K562 (cell line): ENCODE measurements at regions of chr7 and their contacts with region 1.

Region 1: GRCh38 chr7:148575640-148576411 is 14.7 kb upstream of the C7orf33 start:
- DNase-seq: peak; percentile 75 to 84 (median 77)
- ATAC-seq: peak; percentile 93
- H3K4me3 ChIP-seq: no peak overlapping the region
- H3K27ac ChIP-seq: no peak overlapping the region
- H3K4me1 ChIP-seq: no peaks in the 10 kb centered on the region
- H3K27me3 ChIP-seq: peaks cover 0 to 18% of the 10 kb centered on the region in 2 experiments; a peak in 2 of 5 replicates
- CTCF ChIP-seq: peak; percentile 87 to 96 (median 96)
- EP300 ChIP-seq: no peak
- POLR2A ChIP-seq: no peak
- RAD21 ChIP-seq: peak; percentile 81 to 89

Region 2: DNA sequence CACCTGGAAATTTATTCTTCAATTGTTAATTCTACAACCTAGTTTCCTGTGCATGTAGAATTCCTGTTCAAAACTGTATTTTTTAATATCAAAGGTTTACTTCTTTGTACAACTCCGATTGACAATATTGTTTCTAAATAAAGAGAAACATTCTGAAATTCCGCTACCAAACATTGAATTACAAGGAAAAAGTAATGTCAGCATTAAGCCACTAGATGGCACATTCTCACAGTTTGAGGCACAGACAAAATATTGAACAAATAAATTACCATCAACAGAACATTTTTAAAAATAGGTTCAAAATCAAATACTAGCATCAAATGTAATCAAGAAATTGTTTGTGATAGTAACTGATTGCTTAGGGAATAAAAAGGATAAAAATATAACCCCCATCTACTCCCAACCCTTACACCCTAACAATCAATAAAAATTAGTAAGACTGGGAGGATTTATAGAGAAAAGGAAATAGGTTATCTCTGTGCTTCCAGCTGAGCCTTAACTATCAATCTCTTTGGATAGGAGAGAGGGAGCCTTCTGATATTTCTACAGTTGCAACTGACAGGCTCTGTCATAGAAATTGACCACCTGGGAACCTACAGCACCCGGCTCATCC is 71.8 kb before region 1 on chr7:
- CTCF ChIA-PET with region 1: no interaction called
- POLR2A ChIA-PET with region 1: no interaction called
- in situ Hi-C with region 1: no loop called
- intact Hi-C with region 1: loop called (anchors 1 kb)
- DNase-seq: peak; percentile 27 to 53 (median 47)
- ATAC-seq: peak; percentile 37; the same call in 1 of the 3 replicates
- H3K4me3 ChIP-seq: no peak overlapping the region
- H3K27ac ChIP-seq: no peak overlapping the region
- H3K4me1 ChIP-seq: no peaks in the 10 kb centered on the region
- H3K27me3 ChIP-seq: peaks cover 23 to 50% of the 10 kb centered on the region in 2 experiments; a peak in 4 of 5 replicates
- CTCF ChIP-seq: peak; percentile 59 to 95 (median 67); a peak in 5 of 6 replicates
- EP300 ChIP-seq: no peak
- POLR2A ChIP-seq: no peak
- RAD21 ChIP-seq: peak; percentile 90 to 91

Region 3: GRCh38 chr7:148527707-148528168 is 48.1 kb before region 1 on chr7:
- CTCF ChIA-PET with region 1: no interaction called
- POLR2A ChIA-PET with region 1: no interaction called
- in situ Hi-C with region 1: no loop called
- intact Hi-C with region 1: loop called (anchors 2 kb)
- DNase-seq: peak; percentile 84 to 94 (median 86)
- ATAC-seq: peak; percentile 100
- H3K4me3 ChIP-seq: no peak overlapping the region
- H3K27ac ChIP-seq: no peak overlapping the region
- H3K4me1 ChIP-seq: peaks cover 2 to 4% of the 10 kb centered on the region in 2 experiments; a peak in 2 of 5 replicates
- H3K27me3 ChIP-seq: peaks cover 3 to 12% of the 10 kb centered on the region in 2 experiments; a peak in 3 of 5 replicates
- CTCF ChIP-seq: peak; percentile 99 to 100 (median 100)
- EP300 ChIP-seq: no peak
- POLR2A ChIP-seq: no peak
- RAD21 ChIP-seq: peak; percentile 54 to 81

Region 4: DNA sequence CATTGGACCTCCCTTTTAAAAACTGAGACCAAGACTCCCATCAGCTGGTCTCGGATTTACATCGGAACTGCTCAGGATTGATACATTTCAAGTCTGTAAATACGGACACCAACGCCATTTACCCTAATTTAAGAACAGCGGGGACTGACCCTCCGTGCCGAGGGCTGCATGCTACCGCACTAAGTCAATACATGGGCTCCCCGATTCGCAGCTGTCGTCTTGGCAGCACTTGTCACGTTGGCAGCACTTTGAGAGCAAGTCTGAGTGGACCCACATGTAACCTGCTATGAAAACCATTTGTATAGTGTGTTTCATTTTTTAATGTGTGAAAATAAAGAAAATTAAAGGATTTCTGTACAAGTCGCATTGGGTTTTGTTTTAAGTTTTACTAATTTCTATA is 224.9 kb after region 1 on chr7:
- CTCF ChIA-PET with region 1: no interaction called
- POLR2A ChIA-PET with region 1: no interaction called
- in situ Hi-C with region 1: no loop called
- intact Hi-C with region 1: loop called (anchors 5 kb)
- DNase-seq: no peak
- ATAC-seq: no peak
- H3K4me3 ChIP-seq: no peak overlapping the region
- H3K27ac ChIP-seq: no peak overlapping the region
- H3K4me1 ChIP-seq: no peaks in the 10 kb centered on the region
- H3K27me3 ChIP-seq: no peaks in the 10 kb centered on the region
- CTCF ChIP-seq: no peak
- EP300 ChIP-seq: no peak
- POLR2A ChIP-seq: no peak
- RAD21 ChIP-seq: no peak

Region 5: DNA sequence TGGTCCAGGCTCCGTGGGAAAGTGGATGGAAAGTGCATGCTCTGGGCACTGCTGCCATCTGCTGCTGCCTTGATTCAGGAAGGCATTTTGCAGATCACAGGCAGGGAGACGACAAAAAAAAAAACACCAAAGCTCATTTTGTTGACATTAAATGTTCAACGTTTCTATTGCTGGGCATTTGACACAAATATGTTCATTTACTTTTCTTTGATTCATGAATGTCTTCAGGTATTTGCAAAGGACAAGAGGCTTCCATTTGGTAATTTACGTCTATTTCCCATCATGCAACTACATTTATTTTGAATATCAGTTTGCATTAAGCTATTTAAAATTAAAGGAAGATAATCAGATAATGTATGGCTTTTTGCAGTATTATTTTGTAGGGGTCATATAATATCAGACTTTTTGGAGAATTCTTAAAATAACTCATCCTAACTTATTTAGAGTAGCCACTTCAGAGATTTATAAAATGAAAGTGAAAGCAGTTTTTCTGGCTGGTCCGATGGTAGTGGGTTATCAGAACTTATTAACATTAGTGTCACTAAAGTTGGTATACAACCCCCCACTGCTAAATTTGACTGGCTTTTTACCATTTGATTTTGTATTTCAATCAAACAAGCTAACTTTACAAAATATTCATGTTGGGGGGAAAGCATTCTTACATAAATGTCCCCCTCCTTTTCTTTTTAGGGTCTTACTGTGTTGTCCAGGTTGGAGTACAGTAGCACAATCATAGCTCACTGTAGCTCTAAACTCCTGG is 387.2 kb after region 1 on chr7:
- CTCF ChIA-PET with region 1: interaction called, 33 read pairs
- POLR2A ChIA-PET with region 1: no interaction called
- in situ Hi-C with region 1: loop called (anchors 25 kb)
- intact Hi-C with region 1: loop called (anchors 1 kb)
- DNase-seq: peak; percentile 61 to 86 (median 72)
- ATAC-seq: peak; percentile 65
- H3K4me3 ChIP-seq: peak overlapping the region; percentile 49
- H3K27ac ChIP-seq: peak overlapping the region; percentile 62
- H3K4me1 ChIP-seq: peaks cover 16 to 32% of the 10 kb centered on the region in 2 experiments; a peak in 4 of 5 replicates
- H3K27me3 ChIP-seq: no peaks in the 10 kb centered on the region
- CTCF ChIP-seq: peak; percentile 89 to 98 (median 97)
- EP300 ChIP-seq: peak; percentile 41; the same call in 1 of the 2 replicates
- POLR2A ChIP-seq: no peak
- RAD21 ChIP-seq: peak; percentile 95 to 96

Region 6: DNA sequence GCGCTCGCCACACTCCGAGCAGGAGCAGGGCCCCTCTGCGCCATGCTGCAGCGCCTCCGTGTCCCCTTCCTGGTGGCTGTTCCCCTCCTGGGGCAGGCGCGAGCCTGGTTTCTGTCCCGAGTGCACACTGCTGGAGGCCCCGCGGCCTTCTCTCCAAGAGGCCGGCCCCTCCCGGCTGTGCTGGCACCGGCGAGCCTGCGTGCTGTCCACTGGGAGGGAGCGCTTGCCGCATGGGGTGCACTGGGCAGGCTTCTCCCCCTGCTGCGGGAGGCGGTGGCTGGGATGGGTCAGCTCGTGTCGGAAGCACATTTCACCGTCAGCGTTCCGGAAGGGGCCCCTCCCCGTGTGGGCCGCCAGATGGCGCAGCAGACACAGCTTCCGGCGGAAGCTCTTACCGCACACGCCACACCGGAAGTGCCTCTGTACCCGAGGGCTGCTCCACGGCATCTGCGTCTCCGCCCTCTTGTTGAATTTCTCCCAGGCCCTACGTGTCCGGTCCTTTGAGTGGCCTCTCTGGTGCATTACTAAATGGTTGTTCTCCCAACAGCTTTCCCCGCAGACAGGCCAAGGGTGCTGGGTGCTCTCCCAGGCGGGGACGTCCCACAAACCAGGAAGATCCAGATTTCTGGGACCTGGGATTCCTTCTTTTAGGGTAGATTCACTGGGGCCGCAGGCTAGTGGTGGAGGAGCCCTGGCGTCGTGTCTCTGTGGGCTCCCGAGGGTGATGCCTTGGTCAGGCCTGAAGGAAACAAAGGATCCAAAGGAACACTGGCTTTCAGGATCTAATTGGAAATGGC is 496.0 kb after region 1 on chr7:
- CTCF ChIA-PET with region 1: no interaction called
- POLR2A ChIA-PET with region 1: no interaction called
- in situ Hi-C with region 1: no loop called
- intact Hi-C with region 1: loop called (anchors 10 kb)
- DNase-seq: peak in 3 of 4 experiments; percentile 24 to 48 (median 33)
- ATAC-seq: peak; percentile 74
- H3K4me3 ChIP-seq: no peak overlapping the region
- H3K27ac ChIP-seq: no peak overlapping the region
- H3K4me1 ChIP-seq: peaks cover 0 to 12% of the 10 kb centered on the region in 2 experiments; a peak in 1 of 5 replicates
- H3K27me3 ChIP-seq: no peaks in the 10 kb centered on the region
- CTCF ChIP-seq: peak; percentile 42 to 50 (median 50); a peak in 5 of 6 replicates
- EP300 ChIP-seq: no peak
- POLR2A ChIP-seq: no peak
- RAD21 ChIP-seq: peak in 1 of 2 experiments; percentile 48; a peak in 2 of 4 replicates